ENCODE measurements at regions of chr5 and their contacts with region 1.

Region 1: GRCh38 chr5:180470966-180471582 is 23.1 kb upstream of the CNOT6 start:
- DNase-seq: peak in 4 of 5 donors; percentile 40 to 53 (median 44)
- H3K4me3 ChIP-seq: no peak overlapping the region
- H3K4me3 Mint-ChIP-seq: no peak overlapping the region
- H3K27ac ChIP-seq: no peak overlapping the region
- H3K27ac Mint-ChIP-seq: no peak overlapping the region
- H3K4me1 ChIP-seq: no peaks in the 10 kb centered on the region
- H3K4me1 Mint-ChIP-seq: peaks cover 0 to 2% (median 0%) of the 10 kb centered on the region in 4 donors
- H3K27me3 ChIP-seq: no peaks in the 10 kb centered on the region
- H3K27me3 Mint-ChIP-seq: peaks cover 2 to 4% of the 10 kb centered on the region in 2 donors

Region 2: GRCh38 chr5:179986328-179986727 is 484.7 kb before region 1 on chr5:
- CTCF ChIA-PET with region 1: no interaction called
- POLR2A ChIA-PET with region 1: no interaction called
- intact Hi-C with region 1: no loop called
- DNase-seq: no peak
- H3K4me3 ChIP-seq: no peak overlapping the region
- H3K4me3 Mint-ChIP-seq: no peak overlapping the region
- H3K27ac ChIP-seq: no peak overlapping the region
- H3K27ac Mint-ChIP-seq: no peak overlapping the region
- H3K4me1 ChIP-seq: no peaks in the 10 kb centered on the region
- H3K4me1 Mint-ChIP-seq: no peaks in the 10 kb centered on the region
- H3K27me3 ChIP-seq: no peaks in the 10 kb centered on the region
- H3K27me3 Mint-ChIP-seq: no peaks in the 10 kb centered on the region

Region 3: GRCh38 chr5:180460834-180461233 is 10.2 kb before region 1 on chr5:
- CTCF ChIA-PET with region 1: interaction called, 34 read pairs
- POLR2A ChIA-PET with region 1: no interaction called
- intact Hi-C with region 1: no loop called
- DNase-seq: no peak
- H3K4me3 ChIP-seq: no peak overlapping the region
- H3K4me3 Mint-ChIP-seq: no peak overlapping the region
- H3K27ac ChIP-seq: no peak overlapping the region
- H3K27ac Mint-ChIP-seq: no peak overlapping the region
- H3K4me1 ChIP-seq: no peaks in the 10 kb centered on the region
- H3K4me1 Mint-ChIP-seq: no peaks in the 10 kb centered on the region
- H3K27me3 ChIP-seq: no peaks in the 10 kb centered on the region
- H3K27me3 Mint-ChIP-seq: peaks cover 0 to 7% of the 10 kb centered on the region in 2 donors

Region 4: DNA sequence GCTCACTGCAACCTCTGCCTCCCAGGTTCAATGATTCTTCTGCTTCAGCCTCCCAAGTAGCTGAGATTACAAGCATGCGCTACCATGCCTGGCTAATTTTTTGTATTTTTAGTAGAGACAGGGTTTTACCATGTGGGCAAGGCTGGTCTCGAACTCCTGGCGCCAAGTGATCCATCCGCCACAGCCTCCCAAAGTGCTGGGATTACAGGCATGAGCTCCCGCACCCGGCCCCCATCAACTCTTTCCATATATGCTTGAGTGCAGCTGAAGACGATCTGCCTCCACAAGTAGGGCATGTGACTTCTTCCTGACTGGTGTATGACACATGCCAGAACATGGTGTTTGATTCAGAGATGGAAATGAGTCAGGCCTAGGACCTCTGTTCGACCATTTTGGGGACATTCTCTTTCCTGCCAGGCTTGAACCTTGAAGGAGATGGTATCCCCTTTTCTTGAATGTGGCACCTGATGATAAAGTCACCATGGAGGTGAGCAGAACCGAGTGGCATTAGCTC is 15.6 kb after region 1 on chr5:
- CTCF ChIA-PET with region 1: interaction called, 33 read pairs
- POLR2A ChIA-PET with region 1: no interaction called
- intact Hi-C with region 1: no loop called
- DNase-seq: no peak
- H3K4me3 ChIP-seq: no peak overlapping the region
- H3K4me3 Mint-ChIP-seq: no peak overlapping the region
- H3K27ac ChIP-seq: no peak overlapping the region
- H3K27ac Mint-ChIP-seq: no peak overlapping the region
- H3K4me1 ChIP-seq: no peaks in the 10 kb centered on the region
- H3K4me1 Mint-ChIP-seq: peaks cover 0 to 3% (median 0%) of the 10 kb centered on the region in 4 donors
- H3K27me3 ChIP-seq: no peaks in the 10 kb centered on the region
- H3K27me3 Mint-ChIP-seq: no peaks in the 10 kb centered on the region

Region 5: DNA sequence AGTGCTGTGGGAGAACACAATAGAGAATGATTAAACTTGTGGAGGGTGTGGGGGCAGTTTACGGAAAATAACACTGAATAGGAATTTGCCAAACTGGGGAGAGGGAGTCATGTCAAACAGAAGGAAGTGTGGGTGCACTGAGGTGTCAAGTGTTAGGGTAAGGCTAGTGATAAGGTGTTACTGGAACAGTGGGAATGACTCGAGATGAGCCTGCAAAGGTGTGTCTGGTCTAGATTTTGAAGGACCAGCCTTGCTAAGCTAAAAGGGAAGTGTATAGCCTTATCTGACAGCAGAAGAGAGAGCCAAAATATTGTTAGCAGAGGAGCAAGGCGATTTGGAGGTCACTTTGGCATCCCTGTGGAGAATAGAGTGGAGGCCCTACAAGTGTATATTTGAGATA is 27.3 kb after region 1 on chr5:
- CTCF ChIA-PET with region 1: no interaction called
- POLR2A ChIA-PET with region 1: no interaction called
- intact Hi-C with region 1: no loop called
- DNase-seq: no peak
- H3K4me3 ChIP-seq: no peak overlapping the region
- H3K4me3 Mint-ChIP-seq: no peak overlapping the region
- H3K27ac ChIP-seq: no peak overlapping the region
- H3K27ac Mint-ChIP-seq: peak overlapping the region in 2 of 7 donors; percentile 6 to 59
- H3K4me1 ChIP-seq: peaks cover 46% of the 10 kb centered on the region
- H3K4me1 Mint-ChIP-seq: peaks cover 24 to 46% (median 37%) of the 10 kb centered on the region in 4 donors
- H3K27me3 ChIP-seq: no peaks in the 10 kb centered on the region
- H3K27me3 Mint-ChIP-seq: no peaks in the 10 kb centered on the region

Region 6: GRCh38 chr5:180784497-180785097 is 313.5 kb after region 1 on chr5:
- CTCF ChIA-PET with region 1: no interaction called
- POLR2A ChIA-PET with region 1: no interaction called
- intact Hi-C with region 1: no loop called
- DNase-seq: peak; percentile 68 to 81 (median 72)
- H3K4me3 ChIP-seq: no peak overlapping the region
- H3K4me3 Mint-ChIP-seq: no peak overlapping the region
- H3K27ac ChIP-seq: no peak overlapping the region
- H3K27ac Mint-ChIP-seq: peak overlapping the region in 2 of 7 donors; percentile 6 to 14
- H3K4me1 ChIP-seq: peaks cover 8% of the 10 kb centered on the region
- H3K4me1 Mint-ChIP-seq: peaks cover 10 to 25% (median 18%) of the 10 kb centered on the region in 4 donors
- H3K27me3 ChIP-seq: no peaks in the 10 kb centered on the region
- H3K27me3 Mint-ChIP-seq: no peaks in the 10 kb centered on the region

Measured in CD4-positive, alpha-beta memory T cell (primary cell).